T-cell (primary cell): ENCODE measurements at regions of chr1 and their contacts with region 1.

Region 1: DNA sequence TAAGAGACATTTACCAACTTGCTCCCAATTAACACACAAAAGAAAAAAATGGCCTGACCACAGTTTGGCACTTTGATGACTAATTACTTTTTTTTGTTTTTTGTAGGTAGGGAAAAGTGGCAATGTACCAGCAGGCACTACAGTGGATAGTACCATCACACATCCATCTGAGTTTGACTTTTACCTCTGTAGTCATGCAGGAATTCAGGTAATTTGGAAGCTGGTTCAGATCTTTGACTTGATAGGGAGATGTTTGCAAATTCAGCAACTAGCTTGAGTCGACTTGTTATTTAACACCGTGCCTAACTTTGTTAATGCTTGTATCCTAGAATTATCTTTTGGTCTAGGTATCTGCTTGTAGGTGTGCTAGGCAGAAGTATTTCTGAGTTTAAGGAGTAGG is 33.0 kb upstream of the AGO1 start:
- DNase-seq: no peak
- ATAC-seq: no peak
- H3K4me3 ChIP-seq: no peak overlapping the region
- H3K4me3 Mint-ChIP-seq: no peak overlapping the region
- H3K27ac ChIP-seq: no peak overlapping the region
- H3K27ac Mint-ChIP-seq: no peak overlapping the region
- H3K4me1 ChIP-seq: no peaks in the 10 kb centered on the region
- H3K4me1 Mint-ChIP-seq: no peaks in the 10 kb centered on the region
- H3K27me3 ChIP-seq: no peaks in the 10 kb centered on the region
- H3K27me3 Mint-ChIP-seq: no peaks in the 10 kb centered on the region

Region 2: GRCh38 chr1:35369922-35370671 is 480.0 kb before region 1 on chr1:
- CTCF ChIA-PET with region 1: no interaction called
- POLR2A ChIA-PET with region 1: interaction called in 1 of 2 experiments, 12 read pairs
- DNase-seq: no peak
- ATAC-seq: no peak
- H3K4me3 ChIP-seq: no peak overlapping the region
- H3K4me3 Mint-ChIP-seq: no peak overlapping the region
- H3K27ac ChIP-seq: no peak overlapping the region
- H3K27ac Mint-ChIP-seq: no peak overlapping the region
- H3K4me1 ChIP-seq: no peaks in the 10 kb centered on the region
- H3K4me1 Mint-ChIP-seq: no peaks in the 10 kb centered on the region
- H3K27me3 ChIP-seq: no peaks in the 10 kb centered on the region
- H3K27me3 Mint-ChIP-seq: no peaks in the 10 kb centered on the region